PC-9 (cell line): ENCODE measurements at regions of chr1 and their contacts with region 1.

Region 1: GRCh38 chr1:20493839-20494608 is 8.0 kb upstream of the CAMK2N1 start:
- DNase-seq: peak; percentile 80 to 91
- H3K4me3 ChIP-seq: no peak overlapping the region
- H3K27ac ChIP-seq: peak overlapping the region; percentile 97
- H3K4me1 ChIP-seq: peaks cover 39% of the 10 kb centered on the region
- H3K27me3 ChIP-seq: no peaks in the 10 kb centered on the region
- CTCF ChIP-seq: peak; percentile 93

Region 2: DNA sequence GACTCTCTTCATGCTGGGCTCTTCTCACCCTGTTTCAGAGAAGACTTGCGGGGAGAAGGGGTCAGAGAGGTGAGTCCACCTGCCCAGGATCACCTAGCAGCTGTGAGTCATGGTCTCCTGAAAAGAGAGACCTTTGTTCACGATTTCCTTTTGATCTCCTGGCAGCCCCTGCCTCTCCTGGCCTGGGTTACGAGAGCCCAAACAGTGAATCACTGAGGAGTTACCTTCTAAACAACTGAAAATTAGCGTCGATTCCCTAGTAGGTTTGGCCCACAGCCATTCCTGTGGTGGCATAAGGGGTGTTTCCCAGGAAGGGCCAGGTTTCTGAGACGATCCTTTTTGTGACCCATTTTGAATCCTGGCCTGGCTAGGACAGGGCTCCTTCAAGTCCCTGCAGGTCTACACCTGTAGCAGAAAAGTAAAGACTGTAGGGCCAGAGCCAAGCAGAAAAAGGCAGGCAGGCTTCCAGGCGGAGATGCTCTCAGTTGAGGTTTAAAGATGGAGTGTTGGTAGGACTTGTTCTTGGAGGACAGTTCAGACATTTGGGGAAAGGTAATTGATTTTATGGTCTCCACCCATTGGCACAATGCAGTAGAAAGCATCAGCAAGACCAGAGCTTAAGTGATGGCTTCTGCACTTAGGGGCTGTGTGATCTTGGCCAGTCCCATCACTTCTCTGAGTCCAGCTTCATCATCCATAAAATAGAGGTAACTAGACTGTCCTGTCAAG is 568.5 kb before region 1 on chr1:
- CTCF ChIA-PET with region 1: no interaction called
- POLR2A ChIA-PET with region 1: no interaction called
- intact Hi-C with region 1: loop called (anchors 1 kb)
- DNase-seq: peak; percentile 86 to 97
- H3K4me3 ChIP-seq: no peak overlapping the region
- H3K27ac ChIP-seq: peak overlapping the region; percentile 92
- H3K4me1 ChIP-seq: peaks cover 74% of the 10 kb centered on the region
- H3K27me3 ChIP-seq: no peaks in the 10 kb centered on the region
- CTCF ChIP-seq: no peak

Region 3: DNA sequence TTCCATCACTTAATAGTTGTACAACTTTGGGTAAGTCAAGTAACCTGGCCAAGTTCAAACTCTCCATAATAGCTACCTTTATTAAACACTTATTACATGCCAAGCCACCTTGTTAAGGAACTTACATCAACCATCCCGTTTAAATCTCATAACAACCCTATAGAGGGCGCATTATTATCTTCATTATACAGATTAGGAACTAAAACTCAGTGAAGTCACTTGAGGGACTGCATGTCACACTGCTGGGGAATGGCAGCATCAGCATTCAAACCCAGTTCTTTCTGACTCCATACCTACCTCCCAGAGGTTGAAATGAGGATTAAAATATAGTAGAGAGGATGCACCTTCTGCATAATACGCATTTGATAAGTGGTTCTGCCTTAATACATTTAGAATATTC is 260.6 kb before region 1 on chr1:
- CTCF ChIA-PET with region 1: no interaction called
- POLR2A ChIA-PET with region 1: no interaction called
- intact Hi-C with region 1: loop called (anchors 1 kb)
- DNase-seq: peak in 1 of 2 experiments; percentile 64
- H3K4me3 ChIP-seq: peak overlapping the region; percentile 23; the same call in 1 of the 2 replicates
- H3K27ac ChIP-seq: peak overlapping the region; percentile 91
- H3K4me1 ChIP-seq: peaks cover 75% of the 10 kb centered on the region
- H3K27me3 ChIP-seq: no peaks in the 10 kb centered on the region
- CTCF ChIP-seq: peak; percentile 54

Region 4: DNA sequence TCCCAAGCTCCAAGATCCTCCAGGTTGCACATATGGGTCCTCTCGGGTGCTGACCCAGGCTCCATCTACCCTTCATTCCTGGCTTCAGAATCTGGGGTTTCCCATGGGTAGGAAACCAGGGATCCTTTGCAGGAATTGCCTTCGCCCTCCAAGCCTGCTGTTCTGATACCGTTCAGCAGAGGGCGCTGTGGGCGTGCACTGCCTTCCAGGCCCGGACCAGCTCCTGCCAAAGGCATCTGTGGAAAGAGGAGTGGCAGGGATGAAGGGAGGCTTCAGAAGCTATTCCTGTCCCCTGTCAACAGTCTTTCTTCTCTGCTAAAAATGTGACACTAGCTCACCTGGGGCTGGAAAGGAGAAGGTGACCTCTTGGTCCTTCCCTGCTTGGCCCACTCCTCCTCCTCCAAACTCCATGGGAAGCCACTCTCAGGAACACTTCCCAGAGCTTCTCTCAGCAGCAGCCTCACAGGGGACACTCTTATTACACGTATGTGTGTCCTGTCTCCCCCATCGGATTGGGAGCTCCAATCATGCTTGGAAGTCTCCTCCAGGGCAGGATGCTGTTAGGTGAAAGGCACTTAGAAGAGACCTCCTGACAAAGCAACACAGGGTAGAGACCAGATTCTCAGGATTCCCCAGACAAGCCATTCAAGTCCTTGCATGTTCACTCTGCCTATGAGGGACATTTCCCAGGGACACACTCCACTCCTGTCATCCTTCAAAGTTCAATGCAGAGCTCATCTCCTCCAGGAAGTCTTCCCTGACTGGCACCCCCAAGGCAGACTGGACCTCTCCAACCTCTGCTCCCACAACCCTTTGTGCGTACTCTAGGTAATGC is 132.0 kb before region 1 on chr1:
- CTCF ChIA-PET with region 1: interaction called, 7 read pairs
- POLR2A ChIA-PET with region 1: no interaction called
- intact Hi-C with region 1: loop called (anchors 1 kb)
- DNase-seq: peak in 1 of 2 experiments; percentile 80
- H3K4me3 ChIP-seq: no peak overlapping the region
- H3K27ac ChIP-seq: no peak overlapping the region
- H3K4me1 ChIP-seq: peaks cover 41% of the 10 kb centered on the region
- H3K27me3 ChIP-seq: no peaks in the 10 kb centered on the region
- CTCF ChIP-seq: peak; percentile 90

Region 5: GRCh38 chr1:20430355-20431175 is 63.5 kb before region 1 on chr1:
- CTCF ChIA-PET with region 1: interaction called, 4 read pairs
- POLR2A ChIA-PET with region 1: no interaction called
- intact Hi-C with region 1: loop called (anchors 2 kb)
- DNase-seq: peak in 1 of 2 experiments; percentile 25
- H3K4me3 ChIP-seq: no peak overlapping the region
- H3K27ac ChIP-seq: no peak overlapping the region
- H3K4me1 ChIP-seq: peaks cover 13% of the 10 kb centered on the region
- H3K27me3 ChIP-seq: no peaks in the 10 kb centered on the region
- CTCF ChIP-seq: peak; percentile 76

Region 6: GRCh38 chr1:20589331-20590278 is 95.6 kb after region 1 on chr1:
- CTCF ChIA-PET with region 1: no interaction called
- POLR2A ChIA-PET with region 1: no interaction called
- intact Hi-C with region 1: no loop called
- DNase-seq: no peak
- H3K4me3 ChIP-seq: peak overlapping the region; percentile 76
- H3K27ac ChIP-seq: peak overlapping the region; percentile 45
- H3K4me1 ChIP-seq: peaks cover 9% of the 10 kb centered on the region
- H3K27me3 ChIP-seq: no peaks in the 10 kb centered on the region
- CTCF ChIP-seq: no peak